B cell (primary cell): ENCODE measurements at regions of chr12 and their contacts with region 1.

Region 1: GRCh38 chr12:10001171-10001776 is 2.4 kb upstream of the CLEC1B start:
- DNase-seq: no peak
- ATAC-seq: no peak
- H3K4me3 ChIP-seq: no peak overlapping the region
- H3K4me3 Mint-ChIP-seq: no peak overlapping the region
- H3K27ac ChIP-seq: no peak overlapping the region
- H3K27ac Mint-ChIP-seq: no peak overlapping the region
- H3K4me1 ChIP-seq: no peaks in the 10 kb centered on the region
- H3K4me1 Mint-ChIP-seq: no peaks in the 10 kb centered on the region
- H3K27me3 ChIP-seq: peaks cover 0 to 10% (median 5%) of the 10 kb centered on the region in 4 experiments
- H3K27me3 Mint-ChIP-seq: peaks cover 39% of the 10 kb centered on the region
- CTCF ChIP-seq: no peak

Region 2: DNA sequence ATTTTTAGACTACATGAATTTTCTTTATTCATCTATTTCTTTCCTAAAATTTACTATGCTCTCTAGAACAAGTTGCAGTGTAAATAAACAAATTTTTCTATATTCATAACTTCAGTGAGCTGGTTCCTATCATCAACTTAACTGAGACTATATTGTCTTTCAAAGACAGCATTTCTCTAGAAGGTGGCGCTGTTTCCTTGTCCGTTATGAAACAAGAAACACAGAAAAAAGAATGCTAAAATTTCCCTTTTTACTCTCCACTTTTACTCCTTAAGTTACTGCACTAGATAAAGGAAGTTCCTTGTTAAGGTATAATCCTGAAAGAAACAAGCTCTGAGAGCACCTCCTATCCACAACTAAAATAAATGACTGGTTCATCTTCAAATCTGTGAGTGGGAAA is 60.9 kb before region 1 on chr12:
- CTCF ChIA-PET with region 1: interaction called, 4 read pairs
- POLR2A ChIA-PET with region 1: no interaction called
- intact Hi-C with region 1: loop called (anchors 5 kb)
- DNase-seq: peak; percentile 42
- ATAC-seq: no peak
- H3K4me3 ChIP-seq: no peak overlapping the region
- H3K4me3 Mint-ChIP-seq: no peak overlapping the region
- H3K27ac ChIP-seq: no peak overlapping the region
- H3K27ac Mint-ChIP-seq: no peak overlapping the region
- H3K4me1 ChIP-seq: peaks cover 11 to 24% of the 10 kb centered on the region in 2 donors
- H3K4me1 Mint-ChIP-seq: peaks cover 20% of the 10 kb centered on the region
- H3K27me3 ChIP-seq: peaks cover 0 to 7% (median 0%) of the 10 kb centered on the region in 4 experiments
- H3K27me3 Mint-ChIP-seq: peaks cover 22% of the 10 kb centered on the region
- CTCF ChIP-seq: peak; percentile 44